T-cell (primary cell): ENCODE measurements at regions of chr18 and their contacts with region 1.

Region 1: DNA sequence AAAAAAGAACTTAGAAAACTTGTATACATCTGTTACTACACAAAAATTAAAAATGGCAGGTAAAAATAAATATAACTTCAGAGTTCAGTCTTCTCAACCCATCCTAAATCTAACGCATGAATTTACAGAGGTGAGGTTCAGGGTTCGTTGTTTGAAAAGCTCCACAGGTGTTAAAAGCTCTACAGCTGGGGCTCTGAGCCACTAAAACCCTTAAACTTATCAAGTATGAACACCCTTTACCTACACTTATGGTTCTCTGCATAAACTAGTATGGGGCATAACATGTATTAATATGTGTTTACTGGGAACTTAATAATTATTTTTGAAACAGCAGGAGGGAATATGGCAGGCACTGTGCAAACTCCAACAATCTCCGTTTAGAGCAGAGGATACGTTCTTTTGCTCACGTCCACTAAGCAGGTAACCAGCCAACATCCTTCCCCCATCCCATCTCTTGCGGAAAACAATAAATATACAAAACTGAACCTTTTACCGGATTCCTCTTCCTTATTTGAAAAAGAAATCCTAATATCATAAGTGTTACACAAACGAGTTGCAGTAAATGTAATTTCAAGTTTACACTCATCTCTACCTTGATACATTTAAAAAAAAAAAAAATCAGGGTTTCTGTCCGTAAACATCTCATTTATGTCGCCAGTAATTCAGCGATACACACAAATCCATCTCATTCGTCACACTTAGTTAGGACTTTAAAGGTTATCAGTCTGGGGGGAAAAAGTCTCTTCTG is 1.3 kb downstream of the PIAS2 start:
- DNase-seq: no peak
- ATAC-seq: no peak
- H3K4me3 ChIP-seq: peak overlapping the region; percentile 57 to 65
- H3K4me3 Mint-ChIP-seq: peak overlapping the region; percentile 86 to 89 (median 87)
- H3K27ac ChIP-seq: peak overlapping the region; percentile 52
- H3K27ac Mint-ChIP-seq: peak overlapping the region; percentile 55 to 87
- H3K4me1 ChIP-seq: peaks cover 5 to 17% of the 10 kb centered on the region in 2 experiments
- H3K4me1 Mint-ChIP-seq: peaks cover 47 to 53% (median 50%) of the 10 kb centered on the region in 3 donors
- H3K27me3 ChIP-seq: no peaks in the 10 kb centered on the region
- H3K27me3 Mint-ChIP-seq: no peaks in the 10 kb centered on the region

Region 2: DNA sequence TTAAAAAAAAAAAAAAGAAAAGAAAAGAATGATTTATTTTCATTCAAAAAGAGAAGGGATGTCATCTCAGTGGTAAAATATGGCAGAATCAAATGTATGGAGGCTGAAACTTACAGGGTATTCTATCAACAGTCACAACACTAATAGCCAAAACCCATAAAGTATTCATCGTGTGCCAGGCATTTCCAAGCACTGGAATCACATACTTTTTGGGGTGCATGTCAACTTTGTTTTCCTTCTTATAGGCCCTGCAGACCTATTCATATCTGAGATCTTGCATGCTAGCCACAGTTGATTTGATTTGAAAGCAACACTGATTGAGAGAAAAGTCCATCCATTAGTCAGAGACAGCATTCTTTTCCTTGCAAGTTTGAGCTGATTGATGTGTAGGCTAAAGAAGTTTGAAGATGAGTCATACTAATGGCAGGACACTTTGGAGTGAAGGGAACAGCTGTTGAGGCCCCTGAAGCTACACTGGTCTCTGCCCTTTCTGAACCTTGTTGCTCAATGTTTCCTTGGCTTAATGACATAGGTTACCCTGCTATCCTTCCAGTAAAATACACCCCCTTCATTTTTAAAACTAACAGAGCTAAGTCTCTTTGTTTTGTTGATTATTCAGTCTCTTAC is 23.5 kb after region 1 on chr18:
- CTCF ChIA-PET with region 1: no interaction called
- POLR2A ChIA-PET with region 1: no interaction called
- DNase-seq: no peak
- ATAC-seq: no peak
- H3K4me3 ChIP-seq: no peak overlapping the region
- H3K4me3 Mint-ChIP-seq: no peak overlapping the region
- H3K27ac ChIP-seq: no peak overlapping the region
- H3K27ac Mint-ChIP-seq: no peak overlapping the region
- H3K4me1 ChIP-seq: peaks cover 0 to 3% of the 10 kb centered on the region in 2 experiments
- H3K4me1 Mint-ChIP-seq: peaks cover 0 to 4% (median 1%) of the 10 kb centered on the region in 3 donors
- H3K27me3 ChIP-seq: no peaks in the 10 kb centered on the region
- H3K27me3 Mint-ChIP-seq: peaks cover 0 to 5% of the 10 kb centered on the region in 2 donors

Region 3: DNA sequence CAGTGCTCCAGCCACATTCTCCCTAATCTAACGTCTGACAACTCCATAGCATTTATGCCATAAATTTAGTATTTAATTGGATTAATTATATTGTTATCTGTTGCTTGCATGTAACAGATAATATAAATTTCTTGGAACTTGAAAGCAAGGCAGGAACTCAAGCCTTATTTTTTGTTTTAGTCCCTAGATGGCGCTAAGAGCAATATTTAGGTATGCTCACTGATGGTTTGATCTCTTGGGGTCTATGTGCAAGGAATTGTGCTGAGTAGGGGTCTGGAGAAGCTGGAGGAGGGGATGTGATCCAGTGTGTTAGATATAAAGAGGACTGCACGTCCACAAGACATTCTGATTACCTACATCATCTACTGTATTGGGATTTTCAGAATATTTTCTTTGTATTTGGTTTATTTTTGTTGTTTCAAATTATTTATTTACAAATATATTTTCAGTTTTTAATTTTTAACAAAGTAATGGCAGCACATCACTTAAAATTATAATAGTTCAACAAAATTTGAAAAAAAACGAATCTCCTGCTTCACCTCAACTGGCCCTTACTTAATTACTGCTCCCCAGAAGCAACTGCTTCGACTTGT is 34.2 kb after region 1 on chr18:
- CTCF ChIA-PET with region 1: interaction called in 1 of 2 experiments, 12 read pairs
- POLR2A ChIA-PET with region 1: interaction called in 1 of 2 experiments, 3 read pairs
- DNase-seq: peak in 1 of 35 experiments; percentile 18
- ATAC-seq: no peak
- H3K4me3 ChIP-seq: no peak overlapping the region
- H3K4me3 Mint-ChIP-seq: no peak overlapping the region
- H3K27ac ChIP-seq: no peak overlapping the region
- H3K27ac Mint-ChIP-seq: no peak overlapping the region
- H3K4me1 ChIP-seq: peaks cover 0 to 4% of the 10 kb centered on the region in 2 experiments
- H3K4me1 Mint-ChIP-seq: no peaks in the 10 kb centered on the region
- H3K27me3 ChIP-seq: peaks cover 0 to 16% of the 10 kb centered on the region in 2 experiments
- H3K27me3 Mint-ChIP-seq: peaks cover 13 to 21% of the 10 kb centered on the region in 2 donors

Region 4: GRCh38 chr18:48356811-48357631 is 1441.0 kb after region 1 on chr18:
- CTCF ChIA-PET with region 1: no interaction called
- POLR2A ChIA-PET with region 1: no interaction called
- DNase-seq: no peak
- ATAC-seq: no peak
- H3K4me3 ChIP-seq: no peak overlapping the region
- H3K4me3 Mint-ChIP-seq: no peak overlapping the region
- H3K27ac ChIP-seq: no peak overlapping the region
- H3K27ac Mint-ChIP-seq: no peak overlapping the region
- H3K4me1 ChIP-seq: no peaks in the 10 kb centered on the region
- H3K4me1 Mint-ChIP-seq: no peaks in the 10 kb centered on the region
- H3K27me3 ChIP-seq: peaks cover 0 to 30% of the 10 kb centered on the region in 2 experiments
- H3K27me3 Mint-ChIP-seq: peaks cover 22 to 31% of the 10 kb centered on the region in 2 donors